ENCODE measurements at regions of chr18 and their contacts with region 1.

Region 1: GRCh38 chr18:43271593-43272432 is 5.5 kb downstream of the SYT4 start:
- DNase-seq: no peak
- ATAC-seq: peak; percentile 67
- H3K4me3 ChIP-seq: no peak overlapping the region
- H3K27ac ChIP-seq: no peak overlapping the region
- H3K4me1 ChIP-seq: no peaks in the 10 kb centered on the region
- H3K27me3 ChIP-seq: no peaks in the 10 kb centered on the region
- CTCF ChIP-seq: peak; percentile 57 to 70 (median 61)
- EP300 ChIP-seq: no peak
- POLR2A ChIP-seq: no peak
- RAD21 ChIP-seq: peak; percentile 74

Region 2: DNA sequence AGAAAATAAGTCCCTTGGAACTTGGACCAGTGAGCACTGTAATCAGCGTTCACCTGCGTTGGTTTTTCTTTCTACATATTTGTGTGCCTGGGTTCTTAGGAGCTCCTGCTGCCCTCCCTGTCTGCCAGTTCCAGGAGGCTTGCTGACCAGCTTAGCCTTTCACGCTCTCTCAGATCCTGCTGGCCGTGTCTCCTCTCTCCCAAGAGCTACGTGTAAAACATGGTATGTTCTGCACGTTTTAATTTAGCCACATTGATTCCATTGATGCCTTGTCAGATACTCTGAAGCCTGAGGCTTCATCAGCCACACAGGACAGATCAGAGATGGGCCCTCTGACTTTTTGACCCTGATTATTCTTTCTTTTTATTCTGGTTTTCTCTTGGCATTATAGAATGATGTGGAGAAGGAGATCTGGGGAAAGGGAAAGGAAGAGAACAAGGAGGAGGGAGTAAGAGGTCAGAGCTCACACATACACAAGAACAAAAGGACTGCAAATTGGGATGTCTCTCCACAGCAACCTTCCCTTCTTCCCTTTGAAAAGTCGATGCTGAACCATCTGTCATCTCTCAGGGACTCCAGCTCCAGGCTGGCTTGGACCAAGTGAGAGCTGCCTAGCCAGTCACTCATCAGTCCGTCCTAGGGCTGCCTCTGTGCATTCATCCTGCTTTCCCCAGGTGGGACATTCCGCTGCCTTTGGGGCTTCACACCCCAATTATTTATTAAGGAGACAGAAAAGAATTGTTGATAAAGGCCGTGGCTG is 1163.9 kb before region 1 on chr18:
- CTCF ChIA-PET with region 1: interaction called, 95 read pairs
- POLR2A ChIA-PET with region 1: no interaction called
- RAD21 ChIA-PET with region 1: interaction called, 42 read pairs
- SMC1A ChIA-PET with region 1: interaction called, 66 read pairs
- in situ Hi-C with region 1: loop called (anchors 10 kb)
- intact Hi-C with region 1: no loop called
- DNase-seq: no peak
- ATAC-seq: no peak
- H3K4me3 ChIP-seq: no peak overlapping the region
- H3K27ac ChIP-seq: no peak overlapping the region
- H3K4me1 ChIP-seq: no peaks in the 10 kb centered on the region
- H3K27me3 ChIP-seq: no peaks in the 10 kb centered on the region
- CTCF ChIP-seq: no peak
- EP300 ChIP-seq: no peak
- POLR2A ChIP-seq: no peak
- RAD21 ChIP-seq: no peak

Region 3: DNA sequence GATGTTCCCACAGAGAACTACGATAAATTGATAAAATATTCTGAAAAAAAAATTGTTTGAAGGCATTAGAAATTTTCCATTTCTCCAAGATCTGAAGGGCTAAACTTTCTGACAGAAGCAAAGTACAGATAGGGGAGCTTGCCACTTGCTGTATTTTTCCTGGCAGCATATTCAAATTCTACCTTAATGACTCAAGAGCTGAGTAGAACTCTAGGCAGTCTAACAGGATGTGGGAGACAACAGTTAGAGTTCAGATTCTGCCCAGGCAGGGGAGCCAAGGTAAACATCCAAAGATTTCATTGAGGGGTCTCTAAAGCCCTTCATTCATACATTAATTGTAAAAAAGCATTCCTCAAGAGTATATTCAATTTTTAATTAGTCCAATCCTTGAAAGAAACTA is 110.3 kb before region 1 on chr18:
- CTCF ChIA-PET with region 1: no interaction called
- POLR2A ChIA-PET with region 1: no interaction called
- RAD21 ChIA-PET with region 1: no interaction called
- SMC1A ChIA-PET with region 1: no interaction called
- in situ Hi-C with region 1: no loop called
- intact Hi-C with region 1: no loop called
- DNase-seq: no peak
- ATAC-seq: no peak
- H3K4me3 ChIP-seq: no peak overlapping the region
- H3K27ac ChIP-seq: no peak overlapping the region
- H3K4me1 ChIP-seq: no peaks in the 10 kb centered on the region
- H3K27me3 ChIP-seq: no peaks in the 10 kb centered on the region
- CTCF ChIP-seq: no peak
- EP300 ChIP-seq: no peak
- POLR2A ChIP-seq: no peak
- RAD21 ChIP-seq: no peak

Region 4: GRCh38 chr18:43248610-43249249 is 23.1 kb before region 1 on chr18:
- CTCF ChIA-PET with region 1: interaction called, 12 read pairs
- POLR2A ChIA-PET with region 1: no interaction called
- RAD21 ChIA-PET with region 1: no interaction called
- SMC1A ChIA-PET with region 1: interaction called, 4 read pairs
- in situ Hi-C with region 1: no loop called
- intact Hi-C with region 1: no loop called
- DNase-seq: no peak
- ATAC-seq: no peak
- H3K4me3 ChIP-seq: no peak overlapping the region
- H3K27ac ChIP-seq: no peak overlapping the region
- H3K4me1 ChIP-seq: no peaks in the 10 kb centered on the region
- H3K27me3 ChIP-seq: no peaks in the 10 kb centered on the region
- CTCF ChIP-seq: no peak
- EP300 ChIP-seq: no peak
- POLR2A ChIP-seq: no peak
- RAD21 ChIP-seq: no peak